GM12878 (cell line): ENCODE measurements at regions of chr9 and their contacts with region 1.

Region 1: GRCh38 chr9:137672907-137673791 is 54.3 kb downstream of the EHMT1 start:
- DNase-seq: peak; percentile 67
- ATAC-seq: peak; percentile 96
- H3K4me3 ChIP-seq: no peak overlapping the region
- H3K27ac ChIP-seq: peak overlapping the region; percentile 72
- H3K4me1 ChIP-seq: peaks cover 12% of the 10 kb centered on the region
- H3K27me3 ChIP-seq: no peaks in the 10 kb centered on the region
- CTCF ChIP-seq: peak; percentile 77 to 95 (median 94)
- EP300 ChIP-seq: peak; percentile 20 to 77; a peak in 1 of 4 replicates
- POLR2A ChIP-seq: no peak
- RAD21 ChIP-seq: peak; percentile 97

Region 2: GRCh38 chr9:137745541-137745991 is 72.4 kb after region 1 on chr9:
- CTCF ChIA-PET with region 1: interaction called, 12 read pairs
- POLR2A ChIA-PET with region 1: no interaction called
- RAD21 ChIA-PET with region 1: interaction called, 10 read pairs
- SMC1A ChIA-PET with region 1: interaction called, 7 read pairs
- in situ Hi-C with region 1: no loop called
- intact Hi-C with region 1: no loop called
- DNase-seq: peak; percentile 77
- ATAC-seq: peak; percentile 83
- H3K4me3 ChIP-seq: peak overlapping the region; percentile 16; the same call in 1 of the 2 replicates
- H3K27ac ChIP-seq: peak overlapping the region; percentile 77
- H3K4me1 ChIP-seq: peaks cover 50% of the 10 kb centered on the region
- H3K27me3 ChIP-seq: no peaks in the 10 kb centered on the region
- CTCF ChIP-seq: no peak
- EP300 ChIP-seq: peak; percentile 24 to 43; a peak in 1 of 4 replicates
- POLR2A ChIP-seq: peak; percentile 70
- RAD21 ChIP-seq: no peak

Region 3: DNA sequence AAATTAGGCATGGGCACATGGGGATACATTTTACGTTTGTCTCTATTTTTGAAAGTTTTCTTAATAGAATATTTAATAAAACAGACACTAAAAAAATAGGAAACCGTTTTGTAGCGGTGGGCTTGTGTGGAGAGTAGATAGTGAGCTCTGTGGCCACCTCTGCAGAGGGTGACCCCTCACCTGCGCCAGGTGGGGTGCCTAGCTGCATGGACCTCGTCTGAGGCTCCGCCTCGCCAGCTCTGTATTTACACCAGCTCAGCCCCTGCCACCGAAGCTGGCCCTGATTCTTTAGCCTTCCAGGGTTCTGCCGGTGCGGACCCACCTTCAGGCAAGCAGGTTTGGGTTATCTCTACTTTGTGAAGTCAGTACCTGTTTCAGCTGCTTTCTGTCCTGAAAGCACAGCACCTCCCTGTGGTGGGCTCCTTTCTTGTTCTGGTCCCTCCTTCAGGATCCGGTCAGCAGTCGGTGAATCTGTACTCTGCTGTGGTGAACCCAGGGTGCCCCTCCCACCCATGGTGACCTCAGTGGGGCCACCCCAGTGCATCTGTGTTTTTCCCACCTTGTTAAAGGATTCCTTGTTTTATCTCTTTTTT is 99.2 kb after region 1 on chr9:
- CTCF ChIA-PET with region 1: interaction called, 18 read pairs
- POLR2A ChIA-PET with region 1: interaction called, 5 read pairs
- RAD21 ChIA-PET with region 1: interaction called, 29 read pairs
- SMC1A ChIA-PET with region 1: interaction called, 14 read pairs
- in situ Hi-C with region 1: no loop called
- intact Hi-C with region 1: no loop called
- DNase-seq: no peak
- ATAC-seq: peak; percentile 57
- H3K4me3 ChIP-seq: no peak overlapping the region
- H3K27ac ChIP-seq: no peak overlapping the region
- H3K4me1 ChIP-seq: no peaks in the 10 kb centered on the region
- H3K27me3 ChIP-seq: no peaks in the 10 kb centered on the region
- CTCF ChIP-seq: peak; percentile 10 to 45 (median 22); a peak in 2 of 6 replicates
- EP300 ChIP-seq: no peak
- POLR2A ChIP-seq: no peak
- RAD21 ChIP-seq: peak; percentile 60

Region 4: GRCh38 chr9:138022121-138022741 is 349.1 kb after region 1 on chr9:
- CTCF ChIA-PET with region 1: interaction called, 3 read pairs
- POLR2A ChIA-PET with region 1: no interaction called
- RAD21 ChIA-PET with region 1: interaction called, 3 read pairs
- SMC1A ChIA-PET with region 1: no interaction called
- in situ Hi-C with region 1: no loop called
- intact Hi-C with region 1: loop called (anchors 10 kb)
- DNase-seq: no peak
- ATAC-seq: peak; percentile 60
- H3K4me3 ChIP-seq: no peak overlapping the region
- H3K27ac ChIP-seq: no peak overlapping the region
- H3K4me1 ChIP-seq: no peaks in the 10 kb centered on the region
- H3K27me3 ChIP-seq: peaks cover 2 to 6% of the 10 kb centered on the region in 2 experiments; a peak in 3 of 4 replicates
- CTCF ChIP-seq: peak; percentile 27 to 36 (median 33); a peak in 4 of 6 replicates
- EP300 ChIP-seq: no peak
- POLR2A ChIP-seq: no peak
- RAD21 ChIP-seq: 0 out of 2 replicates have a peak, but pooled peaks have one; percentile 18